Left cardiac atrium (tissue), 4 donors: ENCODE measurements at regions of chr13 and their contacts with region 1.

Region 1: DNA sequence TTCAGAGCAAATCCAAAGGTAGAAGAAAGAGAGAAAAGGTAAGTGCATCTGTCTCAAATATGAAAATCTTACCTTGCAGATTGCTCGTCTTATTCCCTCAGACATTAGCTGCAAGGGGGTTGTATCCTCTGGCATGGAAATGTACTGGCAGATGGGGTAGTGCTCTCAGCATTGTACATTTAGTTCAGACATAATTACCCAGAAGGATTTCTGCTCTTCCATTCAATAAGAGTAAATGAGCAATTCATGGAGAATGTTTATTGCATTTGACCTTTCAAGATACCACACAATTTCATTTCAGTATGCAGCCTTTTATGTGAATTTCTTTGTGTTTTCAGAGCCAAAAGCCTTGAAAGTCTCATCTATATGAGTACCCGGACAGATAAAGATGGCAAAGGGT is 63.8 kb downstream of the SCEL start:
- DNase-seq: no peak
- ATAC-seq: no peak

Region 2: DNA sequence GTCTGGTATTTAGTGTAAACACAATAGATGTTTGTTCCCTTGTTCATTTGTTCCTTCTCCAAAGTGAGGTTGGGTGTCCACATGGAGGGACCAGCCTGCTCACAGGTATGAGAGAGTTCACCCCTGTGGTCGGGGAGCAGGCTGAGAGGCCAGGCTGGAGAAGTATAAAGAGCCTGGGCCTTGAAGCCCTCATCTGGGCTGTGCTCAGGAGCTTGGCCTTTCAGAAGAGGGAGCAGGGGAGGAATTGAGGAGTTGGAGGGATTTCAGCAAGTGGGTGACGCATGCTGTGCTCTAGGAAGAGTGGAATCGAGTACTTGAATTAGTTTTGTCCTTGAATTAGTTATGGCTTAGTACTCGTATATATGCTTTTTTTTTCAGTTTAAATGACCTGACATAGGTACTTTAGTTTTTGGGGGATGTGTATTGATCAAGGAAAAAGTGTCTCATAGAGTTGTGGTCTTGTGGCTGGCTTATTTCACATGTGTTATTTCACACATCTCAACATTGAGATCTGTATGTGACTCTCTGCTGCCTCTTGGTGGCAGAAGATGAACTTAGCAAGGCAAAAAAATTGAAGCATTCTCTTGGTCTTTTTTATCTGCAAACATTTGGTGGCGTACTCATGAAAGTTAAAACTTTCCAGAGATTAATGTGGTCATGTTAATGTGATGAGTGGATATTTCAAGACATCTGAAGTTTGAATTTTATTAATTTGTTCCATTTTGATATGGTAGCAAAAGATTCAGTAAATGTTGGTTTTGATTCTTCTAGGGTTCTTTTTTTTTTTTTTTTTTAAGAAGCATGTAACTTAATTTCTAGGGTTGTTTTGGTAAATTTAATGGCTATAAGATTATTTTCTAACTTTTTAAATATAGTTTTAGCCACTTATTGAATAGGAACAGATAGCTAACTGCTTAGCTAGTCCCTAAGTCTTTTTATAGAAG is 152.4 kb after region 1 on chr13:
- intact Hi-C with region 1: loop called in 1 of 2 experiments (anchors 5 kb)
- DNase-seq: no peak
- ATAC-seq: peak; percentile 68 to 72

Region 3: DNA sequence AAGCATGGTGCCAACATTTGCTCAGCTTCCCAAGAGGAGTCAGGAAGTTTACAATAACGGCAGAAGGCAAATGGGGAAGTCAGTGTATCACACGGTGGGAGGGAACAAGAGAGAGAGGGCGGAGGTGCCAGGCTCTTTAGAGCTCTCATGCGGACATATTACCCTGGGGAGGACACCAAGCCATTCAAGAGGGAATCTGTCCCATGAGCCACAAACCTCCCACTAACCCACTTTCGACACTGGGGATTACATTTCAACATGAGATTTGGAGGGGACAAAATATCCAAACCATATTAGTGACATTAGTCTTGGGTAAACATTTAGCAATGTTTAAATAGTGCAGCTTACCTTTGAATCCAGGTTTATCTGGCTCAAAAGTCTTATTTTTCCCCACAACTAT is 168.1 kb after region 1 on chr13:
- intact Hi-C with region 1: loop called in 1 of 2 experiments (anchors 10 kb)
- DNase-seq: no peak
- ATAC-seq: peak in 1 of 2 donors; percentile 44

Region 4: GRCh38 chr13:78603240-78603957 is 1004.0 kb after region 1 on chr13 and contains the start of gene POU4F1:
- intact Hi-C with region 1: no loop called
- DNase-seq: no peak
- ATAC-seq: peak; percentile 29 to 45
- total RNA-seq, gene POU4F1: not detected